Aorta (tissue), 5 donors: ENCODE measurements at regions of chr6 and their contacts with region 1.

Region 1: DNA sequence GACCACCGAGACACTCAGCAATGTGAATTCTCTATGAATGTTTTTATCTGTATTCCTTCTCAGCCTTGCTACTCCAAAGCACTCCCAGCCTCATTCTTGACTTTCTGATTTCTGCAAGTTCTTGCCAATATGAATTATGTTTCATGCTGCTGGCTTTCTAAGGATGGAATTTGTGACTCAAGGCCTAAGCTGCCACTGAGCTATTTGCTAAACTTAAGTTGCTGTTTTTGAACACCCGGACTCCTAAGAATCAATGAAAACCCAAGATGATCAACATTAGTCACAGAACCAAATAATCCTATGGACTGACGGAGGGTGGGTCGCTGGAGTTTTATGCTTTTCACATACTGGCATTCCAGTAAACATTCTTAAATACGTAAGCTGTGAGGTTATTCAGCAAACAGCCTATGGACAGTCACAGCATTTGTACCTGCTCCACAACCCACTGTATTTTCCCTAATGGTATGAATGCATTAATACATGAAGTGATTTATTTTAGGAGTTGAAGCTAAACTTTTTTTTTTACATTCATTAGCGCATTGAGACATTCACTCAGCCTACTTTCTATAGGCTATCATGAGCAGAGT is 8.2 kb upstream of the PXDC1 start:
- DNase-seq: no peak
- ATAC-seq: peak; percentile 59
- H3K4me3 ChIP-seq: no peak overlapping the region
- H3K27ac ChIP-seq: peak overlapping the region; percentile 64 to 83
- H3K4me1 ChIP-seq: peaks cover 8% of the 10 kb centered on the region in 2 donors
- H3K27me3 ChIP-seq: no peaks in the 10 kb centered on the region

Region 2: DNA sequence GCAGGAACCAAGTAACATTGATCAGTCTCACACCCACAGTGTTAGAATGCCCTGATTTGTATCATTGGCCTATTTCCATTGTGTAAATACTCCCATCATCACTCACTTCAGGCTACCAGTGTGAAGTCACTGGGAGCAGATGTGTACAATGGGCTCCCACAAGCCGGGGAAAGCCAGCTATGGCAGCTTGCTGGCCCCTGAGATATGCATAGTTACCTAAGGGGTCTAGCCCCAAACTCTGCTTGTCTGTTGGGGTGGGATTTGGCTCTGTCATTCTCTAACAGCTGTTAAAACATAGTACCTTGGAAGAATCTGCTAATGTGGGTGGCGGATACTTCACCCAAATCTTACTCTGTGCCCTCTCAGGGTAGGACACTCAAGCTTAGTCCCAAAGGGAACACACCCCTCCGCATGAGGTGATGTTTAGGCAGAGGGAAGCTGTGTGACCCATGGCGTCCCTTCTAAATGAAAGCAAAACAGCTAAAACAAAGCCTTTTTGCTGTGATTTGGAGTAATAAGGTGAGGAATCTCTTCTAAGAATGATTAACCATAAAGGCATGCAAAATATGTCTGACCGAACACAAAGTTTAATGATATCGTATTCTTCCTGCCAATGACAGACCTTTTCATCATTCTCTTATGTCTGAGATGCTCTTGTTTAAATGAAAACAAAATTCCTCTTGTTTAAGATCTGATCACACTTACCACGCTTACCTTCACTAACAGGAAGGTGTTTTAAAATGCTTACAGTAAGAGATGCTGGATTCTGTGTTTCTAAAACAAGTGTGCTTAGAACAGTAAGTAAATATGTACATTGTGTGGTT is 37.7 kb after region 1 on chr6:
- intact Hi-C with region 1: loop called in 1 of 2 experiments (anchors 5 kb)
- DNase-seq: no peak
- ATAC-seq: no peak
- H3K4me3 ChIP-seq: no peak overlapping the region
- H3K27ac ChIP-seq: no peak overlapping the region
- H3K4me1 ChIP-seq: peaks cover 0 to 6% of the 10 kb centered on the region in 2 donors
- H3K27me3 ChIP-seq: no peaks in the 10 kb centered on the region